MCF 10A (cell line): ENCODE measurements at regions of chr20 and their contacts with region 1.

Region 1: DNA sequence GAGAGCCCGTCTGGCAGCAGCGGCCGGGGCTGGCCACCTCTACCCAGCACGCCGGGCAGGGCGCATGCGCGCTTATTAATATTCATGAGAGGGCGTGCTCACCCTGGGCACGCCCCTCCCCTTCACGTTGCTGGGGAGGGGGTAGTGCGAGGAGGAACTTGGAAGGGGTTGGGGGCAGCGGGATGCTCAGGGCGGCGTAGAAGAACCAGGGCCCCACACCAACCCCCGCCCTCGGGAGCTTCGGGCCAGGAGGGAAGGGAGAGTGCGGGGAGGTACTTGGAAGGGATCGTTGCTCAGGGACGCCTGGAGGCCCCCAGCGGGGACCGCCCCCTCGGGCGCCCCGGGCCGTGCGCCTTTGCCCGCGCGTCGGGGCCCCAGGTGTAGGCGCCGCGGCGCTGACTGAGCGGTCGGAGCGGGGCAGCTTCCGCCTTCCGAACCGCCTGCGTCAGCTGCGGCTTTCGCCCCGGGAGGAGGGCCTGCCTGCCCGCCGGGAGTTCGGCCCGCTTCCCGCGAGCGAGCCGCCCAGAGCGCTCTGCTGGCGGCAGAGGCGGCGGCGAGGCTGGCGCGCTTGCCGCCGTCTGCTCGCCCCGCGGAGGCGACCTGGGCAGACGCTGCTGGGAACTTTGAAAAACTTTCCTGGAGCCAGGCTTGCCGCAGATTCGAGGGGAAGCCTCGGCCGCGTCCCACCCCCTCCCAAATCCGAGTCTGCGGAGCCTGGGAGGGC is at the start of gene JAG1:
- DNase-seq: peak; percentile 95
- H3K4me3 Mint-ChIP-seq: peak within 1 kb of the TSS; percentile 98
- H3K27ac Mint-ChIP-seq: peak within 1 kb of the TSS; percentile 91
- H3K4me1 Mint-ChIP-seq: peaks cover 29% of the 10 kb centered on the region
- H3K27me3 Mint-ChIP-seq: no peaks in the 10 kb centered on the region
- CTCF ChIP-seq: no peak
- total RNA-seq, gene JAG1: 62.5 and 88.0 TPM in 2 replicates

Region 2: GRCh38 chr20:10179574-10180298 is 494.4 kb before region 1 on chr20:
- CTCF ChIA-PET with region 1: no interaction called
- POLR2A ChIA-PET with region 1: no interaction called
- intact Hi-C with region 1: no loop called
- DNase-seq: peak; percentile 14
- H3K4me3 Mint-ChIP-seq: no peak overlapping the region
- H3K27ac Mint-ChIP-seq: no peak overlapping the region
- H3K4me1 Mint-ChIP-seq: no peaks in the 10 kb centered on the region
- H3K27me3 Mint-ChIP-seq: peaks cover 14% of the 10 kb centered on the region
- CTCF ChIP-seq: no peak

Region 3: DNA sequence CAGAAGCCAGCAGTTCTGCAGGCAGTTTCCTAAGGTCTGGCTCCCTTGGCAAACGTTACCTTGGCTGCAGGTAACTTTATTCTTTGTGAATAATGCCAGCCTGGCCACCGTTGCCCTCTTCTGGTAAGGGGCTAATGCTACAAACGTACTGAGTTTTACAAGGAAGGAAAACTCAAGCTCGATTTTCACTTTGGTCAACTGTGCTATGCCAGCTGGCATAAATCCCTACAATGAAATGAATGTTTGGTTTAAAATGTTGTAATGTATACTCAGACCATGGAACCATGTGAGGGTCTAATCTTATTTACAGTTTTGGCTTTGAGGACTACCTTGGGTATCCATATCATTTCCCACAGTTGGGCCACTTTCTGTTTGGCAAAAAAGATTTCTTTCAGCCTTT is 137.6 kb before region 1 on chr20:
- CTCF ChIA-PET with region 1: interaction called, 10 read pairs
- POLR2A ChIA-PET with region 1: interaction called, 6 read pairs
- intact Hi-C with region 1: no loop called
- DNase-seq: peak; percentile 71
- H3K4me3 Mint-ChIP-seq: no peak overlapping the region
- H3K27ac Mint-ChIP-seq: no peak overlapping the region
- H3K4me1 Mint-ChIP-seq: peaks cover 31% of the 10 kb centered on the region
- H3K27me3 Mint-ChIP-seq: no peaks in the 10 kb centered on the region
- CTCF ChIP-seq: peak; percentile 44

Region 4: GRCh38 chr20:10626896-10627295 is 47.3 kb before region 1 on chr20:
- CTCF ChIA-PET with region 1: interaction called, 10 read pairs
- POLR2A ChIA-PET with region 1: interaction called, 9 read pairs
- intact Hi-C with region 1: no loop called
- DNase-seq: peak; percentile 86
- H3K4me3 Mint-ChIP-seq: no peak overlapping the region
- H3K27ac Mint-ChIP-seq: peak overlapping the region; percentile 27
- H3K4me1 Mint-ChIP-seq: peaks cover 25% of the 10 kb centered on the region
- H3K27me3 Mint-ChIP-seq: no peaks in the 10 kb centered on the region
- CTCF ChIP-seq: no peak

Region 5: GRCh38 chr20:10761232-10761631 is 87.1 kb after region 1 on chr20:
- CTCF ChIA-PET with region 1: no interaction called
- POLR2A ChIA-PET with region 1: interaction called, 15 read pairs
- intact Hi-C with region 1: loop called (anchors 10 kb)
- DNase-seq: peak; percentile 97
- H3K4me3 Mint-ChIP-seq: peak overlapping the region; percentile 37
- H3K27ac Mint-ChIP-seq: no peak overlapping the region
- H3K4me1 Mint-ChIP-seq: peaks cover 18% of the 10 kb centered on the region
- H3K27me3 Mint-ChIP-seq: no peaks in the 10 kb centered on the region
- CTCF ChIP-seq: no peak

Region 6: DNA sequence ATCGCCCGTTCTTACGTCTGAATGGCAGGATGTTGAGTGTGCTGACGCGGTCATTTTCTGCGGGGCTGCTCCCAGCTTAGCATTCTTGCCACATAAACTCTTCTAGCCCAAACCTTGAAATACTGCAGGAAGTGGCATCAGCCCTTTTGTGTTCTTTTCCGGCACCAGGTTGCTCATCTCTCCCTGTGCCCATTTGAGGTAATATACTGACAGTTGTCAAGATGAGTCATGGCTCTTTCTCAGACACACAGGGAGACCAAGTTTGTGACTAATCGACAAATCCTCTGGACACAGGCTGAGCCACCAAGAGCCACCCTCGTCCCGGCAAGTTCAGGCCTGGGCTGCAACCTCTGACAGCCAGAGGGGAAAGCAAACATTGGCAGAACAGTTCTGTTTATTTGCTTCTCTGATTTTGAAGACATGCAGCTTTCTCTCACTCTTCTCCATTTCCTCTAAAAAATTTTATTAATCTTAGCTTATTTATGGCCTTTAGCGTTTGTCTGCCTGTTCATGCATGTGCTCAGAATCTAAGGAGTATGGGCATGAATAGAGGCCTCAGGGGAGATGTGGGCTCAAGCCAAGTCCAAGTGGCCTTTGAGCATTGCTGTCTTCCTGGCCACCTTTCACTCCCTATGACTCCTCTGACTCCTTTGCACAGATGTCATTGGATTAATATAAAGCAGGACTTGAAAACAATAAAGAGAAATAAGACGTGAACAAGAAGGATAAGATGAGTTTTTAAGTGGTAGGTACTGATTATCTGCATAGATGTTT is 327.8 kb after region 1 on chr20:
- CTCF ChIA-PET with region 1: interaction called, 8 read pairs
- POLR2A ChIA-PET with region 1: interaction called, 34 read pairs
- intact Hi-C with region 1: loop called (anchors 1 kb)
- DNase-seq: peak; percentile 99
- H3K4me3 Mint-ChIP-seq: peak overlapping the region; percentile 33
- H3K27ac Mint-ChIP-seq: peak overlapping the region; percentile 91
- H3K4me1 Mint-ChIP-seq: peaks cover 28% of the 10 kb centered on the region
- H3K27me3 Mint-ChIP-seq: no peaks in the 10 kb centered on the region
- CTCF ChIP-seq: no peak

Region 7: GRCh38 chr20:11274141-11274594 is 600.0 kb after region 1 on chr20:
- CTCF ChIA-PET with region 1: interaction called, 26 read pairs
- POLR2A ChIA-PET with region 1: interaction called, 34 read pairs
- intact Hi-C with region 1: loop called (anchors 1 kb)
- DNase-seq: peak; percentile 78
- H3K4me3 Mint-ChIP-seq: no peak overlapping the region
- H3K27ac Mint-ChIP-seq: peak overlapping the region; percentile 29
- H3K4me1 Mint-ChIP-seq: peaks cover 6% of the 10 kb centered on the region
- H3K27me3 Mint-ChIP-seq: no peaks in the 10 kb centered on the region
- CTCF ChIP-seq: peak; percentile 59